Activated CD8-positive, alpha-beta T cell treated with anti-CD3 and anti-CD28 coated beads for 36 hours (primary cell): ENCODE measurements at regions of chr11 and their contacts with region 1.

Region 1: DNA sequence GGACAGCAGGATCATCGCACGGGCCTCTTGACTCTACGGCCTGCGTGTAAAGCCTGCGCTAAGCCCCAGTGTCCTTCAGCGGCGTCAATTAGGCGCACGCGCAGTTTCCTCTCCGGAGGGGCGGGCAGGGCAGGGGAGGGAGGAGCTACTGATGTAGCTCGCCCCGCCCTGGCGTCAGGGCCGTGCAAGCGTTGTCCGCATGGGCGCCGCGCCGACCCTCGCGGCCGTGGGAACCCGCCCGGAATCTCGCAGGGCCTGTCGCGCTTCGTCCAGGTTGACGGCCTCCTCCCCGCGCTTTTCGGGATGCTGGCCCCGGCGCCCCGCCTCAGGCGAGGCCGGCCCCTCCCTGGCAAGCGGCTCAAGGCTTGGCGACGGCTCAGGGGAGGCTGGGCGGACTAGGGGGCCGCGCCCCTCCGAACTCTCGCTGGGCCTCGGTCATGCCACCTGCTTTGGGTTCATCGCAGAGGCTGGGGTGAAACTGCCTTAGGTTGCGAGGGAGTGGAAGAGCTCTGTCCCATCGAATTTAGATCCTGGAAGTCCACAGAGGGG is 61.1 kb downstream of the ST3GAL4 start:
- DNase-seq: peak; percentile 83
- ATAC-seq: peak; percentile 100
- H3K4me3 Mint-ChIP-seq: peak overlapping the region; percentile 54
- H3K27ac Mint-ChIP-seq: peak overlapping the region; percentile 55
- H3K4me1 Mint-ChIP-seq: peaks cover 19% of the 10 kb centered on the region
- H3K27me3 Mint-ChIP-seq: peaks cover 4% of the 10 kb centered on the region
- CTCF ChIP-seq: no peak

Region 2: GRCh38 chr11:126217491-126217890 is 199.1 kb before region 1 on chr11:
- CTCF ChIA-PET with region 1: no interaction called
- POLR2A ChIA-PET with region 1: no interaction called
- intact Hi-C with region 1: no loop called
- DNase-seq: no peak
- ATAC-seq: no peak
- H3K4me3 Mint-ChIP-seq: no peak overlapping the region
- H3K27ac Mint-ChIP-seq: no peak overlapping the region
- H3K4me1 Mint-ChIP-seq: peaks cover 28% of the 10 kb centered on the region
- H3K27me3 Mint-ChIP-seq: no peaks in the 10 kb centered on the region
- CTCF ChIP-seq: no peak

Region 3: DNA sequence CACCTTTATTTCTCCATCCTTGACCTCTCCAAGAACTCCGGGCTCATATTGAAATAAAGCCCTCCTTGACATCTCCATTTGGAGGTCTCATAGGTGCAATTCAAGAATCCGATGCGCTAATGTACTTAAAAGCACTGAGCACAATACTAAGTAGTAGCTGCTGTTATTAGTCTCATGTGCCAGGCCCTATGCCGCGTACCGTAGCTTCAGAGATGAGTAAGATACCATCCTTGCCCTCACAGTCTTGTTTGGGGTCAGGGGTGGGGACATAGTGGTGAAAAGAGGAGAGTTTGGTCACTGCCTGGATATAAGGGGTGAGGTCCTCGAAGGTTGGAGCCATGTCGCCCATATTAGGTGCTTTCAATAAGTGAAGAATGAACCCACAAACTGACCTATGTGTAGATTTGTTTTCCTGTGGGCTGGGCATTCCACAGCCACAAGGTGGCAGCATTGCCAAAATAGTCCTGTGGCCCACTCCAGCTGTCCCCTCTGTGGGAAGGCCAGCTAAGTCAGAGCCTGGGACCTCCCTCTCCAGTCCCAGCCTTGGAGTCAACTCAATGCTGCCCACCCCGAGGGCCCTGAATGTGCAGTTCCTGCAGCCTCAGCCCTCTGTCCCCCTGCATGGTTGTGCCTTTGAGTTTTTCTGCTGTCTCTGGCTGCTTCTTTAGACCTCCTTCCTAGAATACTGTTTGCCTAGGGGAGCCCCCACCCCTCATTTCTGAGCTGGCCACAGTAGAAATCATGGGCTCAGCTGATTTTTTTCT is 106.2 kb before region 1 on chr11:
- CTCF ChIA-PET with region 1: interaction called, 27 read pairs
- POLR2A ChIA-PET with region 1: no interaction called
- intact Hi-C with region 1: loop called (anchors 10 kb)
- DNase-seq: peak; percentile 75
- ATAC-seq: peak; percentile 71
- H3K4me3 Mint-ChIP-seq: no peak overlapping the region
- H3K27ac Mint-ChIP-seq: no peak overlapping the region
- H3K4me1 Mint-ChIP-seq: peaks cover 17% of the 10 kb centered on the region
- H3K27me3 Mint-ChIP-seq: no peaks in the 10 kb centered on the region
- CTCF ChIP-seq: peak; percentile 76

Region 4: GRCh38 chr11:126396965-126397364 is 19.7 kb before region 1 on chr11:
- CTCF ChIA-PET with region 1: no interaction called
- POLR2A ChIA-PET with region 1: no interaction called
- intact Hi-C with region 1: no loop called
- DNase-seq: no peak
- ATAC-seq: no peak
- H3K4me3 Mint-ChIP-seq: no peak overlapping the region
- H3K27ac Mint-ChIP-seq: no peak overlapping the region
- H3K4me1 Mint-ChIP-seq: peaks cover 2% of the 10 kb centered on the region
- H3K27me3 Mint-ChIP-seq: no peaks in the 10 kb centered on the region
- CTCF ChIP-seq: no peak

Region 5: DNA sequence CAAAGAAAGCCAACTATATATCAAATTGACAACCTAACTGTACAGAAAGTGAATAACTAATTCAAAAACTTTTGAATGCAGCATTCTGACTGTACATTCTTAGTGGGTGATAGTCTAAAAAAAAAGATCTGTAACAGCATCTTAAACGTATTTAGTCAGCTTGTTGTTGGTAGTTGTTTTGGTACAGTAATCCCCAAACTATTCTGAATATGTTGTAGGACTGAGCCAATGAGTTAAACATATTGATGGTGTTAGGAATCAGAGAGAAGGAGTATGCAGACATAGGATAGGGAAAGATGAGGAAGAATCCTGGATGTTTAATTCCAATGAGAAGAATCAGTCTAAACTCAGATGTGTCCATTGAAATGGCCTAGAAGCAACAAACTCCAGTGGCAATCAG is 625.8 kb after region 1 on chr11:
- CTCF ChIA-PET with region 1: no interaction called
- POLR2A ChIA-PET with region 1: no interaction called
- intact Hi-C with region 1: no loop called
- DNase-seq: no peak
- ATAC-seq: no peak
- H3K4me3 Mint-ChIP-seq: no peak overlapping the region
- H3K27ac Mint-ChIP-seq: no peak overlapping the region
- H3K4me1 Mint-ChIP-seq: no peaks in the 10 kb centered on the region
- H3K27me3 Mint-ChIP-seq: peaks cover 9% of the 10 kb centered on the region
- CTCF ChIP-seq: no peak